ENCODE measurements at regions of chr5 and their contacts with region 1.

Region 1: GRCh38 chr5:149268928-149269557 is 2.6 kb upstream of the AFAP1L1 start:
- DNase-seq: no peak
- H3K4me3 ChIP-seq: no peak overlapping the region
- CTCF ChIP-seq: peak; percentile 36

Region 2: GRCh38 chr5:149133795-149134780 is 135.0 kb before region 1 on chr5:
- CTCF ChIA-PET with region 1: interaction called, 28 read pairs
- POLR2A ChIA-PET with region 1: no interaction called
- DNase-seq: no peak
- H3K4me3 ChIP-seq: no peak overlapping the region
- CTCF ChIP-seq: no peak

Region 3: DNA sequence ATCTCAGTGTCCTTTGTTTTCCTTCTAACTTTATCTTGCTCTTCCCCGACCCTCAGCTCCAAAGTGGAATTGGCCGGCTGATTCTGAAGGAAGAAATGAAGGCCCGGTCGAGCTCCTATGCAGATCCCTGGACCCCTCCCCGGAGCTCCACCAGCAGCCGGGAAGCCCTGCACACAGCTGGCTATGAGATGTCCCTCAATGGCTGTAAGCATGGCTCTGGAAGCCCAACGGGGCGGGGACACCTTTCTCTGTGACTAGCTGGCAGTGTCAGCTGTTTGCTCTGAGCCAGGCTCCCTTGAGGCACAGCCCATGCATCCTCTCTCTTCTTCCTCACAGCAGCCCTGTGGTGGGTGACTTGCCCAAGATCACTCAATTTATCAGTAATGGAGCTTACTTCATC is 21.3 kb before region 1 on chr5:
- CTCF ChIA-PET with region 1: interaction called, 10 read pairs
- POLR2A ChIA-PET with region 1: no interaction called
- DNase-seq: no peak
- H3K4me3 ChIP-seq: no peak overlapping the region
- CTCF ChIP-seq: no peak

Region 4: GRCh38 chr5:149257965-149258705 is 10.9 kb before region 1 on chr5:
- CTCF ChIA-PET with region 1: interaction called, 19 read pairs
- POLR2A ChIA-PET with region 1: no interaction called
- DNase-seq: peak; percentile 45
- H3K4me3 ChIP-seq: no peak overlapping the region
- CTCF ChIP-seq: no peak

Measured in AG04449 (cell line).